SK-N-SH (cell line): ENCODE measurements at regions of chr4 and their contacts with region 1.

Region 1: DNA sequence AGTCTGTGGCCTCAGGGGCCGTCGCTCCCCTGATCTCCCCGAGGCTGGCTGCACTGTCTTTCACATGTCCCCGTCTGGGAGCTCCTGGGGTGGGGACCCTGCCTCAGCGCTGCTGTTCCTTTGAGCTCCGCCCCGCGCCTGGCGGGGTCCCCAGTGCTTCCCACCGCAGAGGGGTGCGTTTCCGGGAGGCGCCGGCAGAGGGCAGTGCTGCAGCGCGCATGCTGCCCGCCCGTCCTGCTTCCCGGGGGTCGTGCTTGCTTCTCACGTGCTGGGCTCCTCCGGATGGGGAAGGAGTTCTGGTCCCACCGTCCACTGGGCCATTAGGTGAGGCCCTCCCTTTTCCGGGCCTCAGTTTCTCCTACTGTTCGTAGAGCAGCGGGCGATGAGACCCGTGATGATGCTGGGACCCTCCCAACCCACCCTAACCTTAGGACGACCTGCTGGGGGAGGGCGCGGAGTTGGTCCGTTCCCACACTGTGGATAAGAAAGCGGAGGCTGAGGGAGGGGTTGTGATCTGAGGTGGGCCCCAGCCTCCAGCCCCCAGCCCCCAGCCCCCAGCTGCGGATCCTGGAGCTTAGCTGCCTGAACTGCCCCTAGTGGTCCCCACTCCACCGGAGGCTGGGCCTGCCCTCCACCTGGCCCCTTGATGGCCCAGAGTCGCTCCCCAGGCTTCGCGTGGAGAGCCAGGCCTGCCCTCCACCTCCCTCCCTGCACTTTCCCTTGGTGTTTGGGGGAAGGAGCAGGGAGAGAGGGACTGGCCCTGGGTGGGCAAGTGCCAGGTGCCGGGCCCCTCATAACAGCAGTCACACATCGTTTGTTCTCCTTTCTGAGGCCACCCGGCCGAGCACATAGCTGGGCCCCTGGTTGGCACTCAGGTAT is 15.3 kb downstream of the CPZ start:
- DNase-seq: peak; percentile 97
- H3K4me3 ChIP-seq: peak overlapping the region in 1 of 2 experiments; percentile 48; a peak in 1 of 4 replicates
- H3K27ac ChIP-seq: no peak overlapping the region
- H3K4me1 ChIP-seq: peaks cover 0 to 10% of the 10 kb centered on the region in 2 experiments; a peak in 1 of 4 replicates
- H3K27me3 ChIP-seq: no peaks in the 10 kb centered on the region
- CTCF ChIP-seq: peak; percentile 87
- EP300 ChIP-seq: no peak
- RAD21 ChIP-seq: peak; percentile 84

Region 2: GRCh38 chr4:8428293-8429097 is 179.3 kb before region 1 on chr4:
- CTCF ChIA-PET with region 1: no interaction called
- POLR2A ChIA-PET with region 1: no interaction called
- DNase-seq: peak; percentile 99
- H3K4me3 ChIP-seq: peak overlapping the region; percentile 80 to 90
- H3K27ac ChIP-seq: peak overlapping the region; percentile 47 to 69
- H3K4me1 ChIP-seq: peaks cover 0 to 16% of the 10 kb centered on the region in 2 experiments; a peak in 1 of 4 replicates
- H3K27me3 ChIP-seq: no peaks in the 10 kb centered on the region
- CTCF ChIP-seq: peak; percentile 61
- EP300 ChIP-seq: no peak
- RAD21 ChIP-seq: no peak

Region 3: DNA sequence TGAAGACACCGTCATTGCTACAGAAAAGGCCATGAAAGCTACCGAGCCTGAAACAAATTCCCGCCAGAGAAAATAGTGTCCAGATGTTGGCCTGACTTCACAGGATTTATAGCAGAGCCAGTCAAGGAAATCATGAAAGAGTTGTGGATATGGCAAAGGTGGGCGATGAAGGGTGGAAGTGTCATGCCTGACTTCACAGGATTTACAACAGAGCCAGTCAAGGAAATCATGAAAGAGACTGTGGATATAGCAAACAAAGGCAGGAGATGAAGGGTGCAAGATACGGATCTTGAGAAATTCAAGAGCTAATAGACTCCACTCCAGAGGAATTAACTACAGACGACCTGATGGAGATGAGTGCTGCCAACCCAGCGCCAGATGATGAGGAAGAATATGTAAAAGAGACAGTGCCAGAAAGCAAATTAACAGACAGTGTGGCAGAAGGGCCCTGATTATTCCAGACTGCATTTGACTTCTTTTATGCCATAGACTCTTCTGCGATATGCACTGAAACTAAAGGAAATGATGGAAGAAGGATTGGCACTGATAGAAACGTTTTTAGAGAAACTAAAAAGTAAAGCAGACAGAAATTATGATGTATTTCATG is 150.1 kb before region 1 on chr4:
- CTCF ChIA-PET with region 1: interaction called, 10 read pairs
- POLR2A ChIA-PET with region 1: no interaction called
- DNase-seq: no peak
- H3K4me3 ChIP-seq: no peak overlapping the region
- H3K27ac ChIP-seq: no peak overlapping the region
- H3K4me1 ChIP-seq: no peaks in the 10 kb centered on the region
- H3K27me3 ChIP-seq: no peaks in the 10 kb centered on the region
- CTCF ChIP-seq: no peak
- EP300 ChIP-seq: no peak
- RAD21 ChIP-seq: no peak

Region 4: DNA sequence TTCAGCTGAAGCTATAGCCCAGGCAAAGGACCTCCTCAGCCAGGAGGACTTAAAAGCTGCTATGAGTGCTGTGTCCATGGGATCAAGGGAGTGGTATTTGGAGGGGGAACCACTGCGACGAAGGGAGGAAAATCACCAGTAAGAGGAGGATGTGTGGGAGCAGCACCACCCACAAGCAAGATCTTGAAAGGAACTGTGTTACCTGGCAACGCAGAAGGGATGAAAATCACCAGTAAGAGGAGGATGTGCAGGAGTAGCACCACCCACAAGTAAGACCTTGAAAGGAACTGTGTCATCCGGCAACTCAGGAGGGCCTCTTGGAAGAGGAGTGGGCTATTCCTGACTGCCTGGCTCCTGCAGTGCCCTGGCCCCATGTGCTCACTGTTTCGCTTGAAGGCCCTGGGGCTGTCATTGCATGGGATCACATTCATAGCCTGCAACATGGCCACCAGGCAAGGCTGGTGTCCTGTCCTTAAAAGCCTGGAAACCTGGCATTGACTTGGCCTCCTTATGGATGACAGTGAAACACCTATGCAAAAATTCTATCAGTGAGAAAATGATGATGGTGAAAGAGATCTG is 119.0 kb before region 1 on chr4:
- CTCF ChIA-PET with region 1: no interaction called
- POLR2A ChIA-PET with region 1: no interaction called
- DNase-seq: no peak
- H3K4me3 ChIP-seq: no peak overlapping the region
- H3K27ac ChIP-seq: no peak overlapping the region
- H3K4me1 ChIP-seq: no peaks in the 10 kb centered on the region
- H3K27me3 ChIP-seq: peaks cover 53% of the 10 kb centered on the region
- CTCF ChIP-seq: no peak
- EP300 ChIP-seq: no peak
- RAD21 ChIP-seq: no peak

Region 5: GRCh38 chr4:8639777-8640720 is 32.2 kb after region 1 on chr4:
- CTCF ChIA-PET with region 1: interaction called, 12 read pairs
- POLR2A ChIA-PET with region 1: no interaction called
- DNase-seq: no peak
- H3K4me3 ChIP-seq: no peak overlapping the region
- H3K27ac ChIP-seq: no peak overlapping the region
- H3K4me1 ChIP-seq: no peaks in the 10 kb centered on the region
- H3K27me3 ChIP-seq: no peaks in the 10 kb centered on the region
- CTCF ChIP-seq: no peak
- EP300 ChIP-seq: no peak
- RAD21 ChIP-seq: no peak

Region 6: GRCh38 chr4:8886612-8887406 is 279.0 kb after region 1 on chr4:
- CTCF ChIA-PET with region 1: interaction called, 10 read pairs
- POLR2A ChIA-PET with region 1: no interaction called
- DNase-seq: no peak
- H3K4me3 ChIP-seq: no peak overlapping the region
- H3K27ac ChIP-seq: no peak overlapping the region
- H3K4me1 ChIP-seq: no peaks in the 10 kb centered on the region
- H3K27me3 ChIP-seq: no peaks in the 10 kb centered on the region
- CTCF ChIP-seq: peak; percentile 20; the same call in 1 of the 2 replicates
- EP300 ChIP-seq: no peak
- RAD21 ChIP-seq: no peak

Region 7: GRCh38 chr4:8897251-8898167 is 289.7 kb after region 1 on chr4:
- CTCF ChIA-PET with region 1: interaction called, 13 read pairs
- POLR2A ChIA-PET with region 1: no interaction called
- DNase-seq: no peak
- H3K4me3 ChIP-seq: no peak overlapping the region
- H3K27ac ChIP-seq: no peak overlapping the region
- H3K4me1 ChIP-seq: no peaks in the 10 kb centered on the region
- H3K27me3 ChIP-seq: no peaks in the 10 kb centered on the region
- CTCF ChIP-seq: no peak
- EP300 ChIP-seq: no peak
- RAD21 ChIP-seq: no peak

Region 8: GRCh38 chr4:8911316-8912088 is 303.7 kb after region 1 on chr4:
- CTCF ChIA-PET with region 1: interaction called, 89 read pairs
- POLR2A ChIA-PET with region 1: no interaction called
- DNase-seq: peak; percentile 84
- H3K4me3 ChIP-seq: no peak overlapping the region
- H3K27ac ChIP-seq: no peak overlapping the region; a peak in 1 of 4 replicates
- H3K4me1 ChIP-seq: peaks cover 0 to 15% of the 10 kb centered on the region in 2 experiments; a peak in 1 of 4 replicates
- H3K27me3 ChIP-seq: no peaks in the 10 kb centered on the region
- CTCF ChIP-seq: no peak
- EP300 ChIP-seq: peak in 1 of 2 experiments; percentile 42; a peak in 1 of 4 replicates
- RAD21 ChIP-seq: no peak